ENCODE measurements at regions of chr6 and their contacts with region 1.

Region 1: DNA sequence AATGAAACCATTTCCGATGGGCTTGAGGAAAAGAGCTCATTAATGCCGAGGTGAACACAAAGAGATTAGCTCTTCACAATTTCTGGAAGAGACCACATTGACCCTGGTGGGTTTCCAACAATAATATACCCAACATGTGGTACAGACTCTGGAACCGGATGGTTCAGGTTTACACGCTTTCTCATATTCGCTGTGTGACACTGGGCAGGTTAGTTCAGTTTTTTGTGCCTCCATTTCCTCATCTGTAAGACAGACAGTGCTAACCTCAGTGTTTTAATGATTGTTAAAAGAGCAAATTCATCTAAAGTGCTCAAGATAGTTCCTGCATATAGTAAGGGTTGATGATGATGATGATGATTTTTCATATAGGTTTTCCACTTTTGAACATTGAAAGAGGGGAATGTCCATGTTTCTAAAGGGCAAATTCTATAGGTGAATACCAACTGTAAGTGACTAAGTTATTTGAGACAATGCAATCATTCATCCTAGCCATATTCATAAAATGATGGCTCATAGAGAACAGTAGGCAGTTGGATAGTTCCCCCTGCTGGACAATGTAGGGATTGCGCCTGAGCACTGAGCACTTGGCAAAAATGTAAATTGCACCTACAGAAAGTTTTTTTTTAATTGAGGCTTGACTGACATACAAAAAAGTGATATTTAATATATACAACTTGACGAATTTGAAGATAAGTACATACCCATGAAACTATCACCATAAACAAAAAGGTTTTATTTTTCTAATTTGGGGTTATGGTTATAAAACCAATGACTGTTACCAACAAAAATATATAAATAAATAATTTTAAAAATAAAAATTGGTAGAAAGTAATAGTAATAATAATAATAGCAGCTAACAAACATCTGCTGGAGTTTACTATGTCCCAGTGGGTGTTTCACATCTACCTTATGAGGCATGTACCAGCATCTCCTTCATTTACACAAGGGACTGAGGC is 2.1 kb upstream of the PERP start:
- DNase-seq: no peak
- H3K4me3 ChIP-seq: no peak overlapping the region
- H3K27me3 ChIP-seq: peaks cover 4% of the 10 kb centered on the region
- CTCF ChIP-seq: peak; percentile 91

Region 2: DNA sequence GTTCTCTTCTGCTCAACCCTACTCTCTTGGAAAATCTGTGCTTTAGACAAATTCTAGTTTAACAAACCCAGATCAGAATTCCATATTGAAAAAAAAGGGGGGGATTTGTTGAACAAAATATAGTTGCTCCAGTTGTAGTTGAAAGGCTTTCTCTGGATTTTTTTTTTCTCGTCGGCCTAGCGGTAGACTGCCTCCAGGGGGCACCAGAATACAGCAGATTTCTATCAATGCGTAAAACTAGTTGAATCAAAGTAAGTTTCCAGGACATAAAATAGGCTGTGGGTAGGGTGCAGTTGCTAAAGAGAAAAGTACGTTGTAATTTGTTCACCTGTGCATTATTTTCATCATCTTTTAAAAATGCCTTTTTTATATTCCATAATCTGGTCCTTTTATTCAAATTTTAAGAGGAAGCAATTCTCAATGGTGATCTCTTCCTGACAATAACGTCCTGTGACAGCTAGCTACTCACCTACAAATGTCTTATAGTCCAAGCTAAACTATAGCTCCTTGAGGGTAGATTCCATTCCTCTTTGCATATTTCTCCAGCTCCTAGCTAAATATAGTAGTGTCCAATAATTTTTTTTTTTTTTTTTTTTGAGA is 107.5 kb before region 1 on chr6:
- CTCF ChIA-PET with region 1: interaction called, 83 read pairs
- POLR2A ChIA-PET with region 1: no interaction called
- DNase-seq: no peak
- H3K4me3 ChIP-seq: no peak overlapping the region
- H3K27me3 ChIP-seq: 0 out of 2 replicates have a peak, but pooled peaks cover 1% of the 10 kb centered on the region
- CTCF ChIP-seq: peak; percentile 90

Region 3: DNA sequence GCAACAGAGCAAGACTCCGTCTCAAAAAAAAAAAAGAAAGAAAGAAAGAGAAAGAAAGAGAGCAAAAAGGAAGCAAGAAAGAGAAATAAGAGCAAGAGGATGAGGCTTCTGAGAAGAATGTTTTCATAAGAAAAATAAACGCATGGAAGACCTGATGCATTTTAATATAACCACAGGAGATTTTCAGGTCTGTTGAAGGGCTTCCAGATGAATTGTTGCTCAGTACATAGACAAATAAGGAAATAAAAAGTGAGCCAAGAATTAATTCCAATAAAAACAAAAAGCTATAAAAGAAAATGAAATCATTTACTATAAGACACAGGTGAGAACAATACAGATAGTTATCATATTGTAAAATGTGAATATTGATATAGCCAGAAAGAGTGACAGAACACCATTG is 45.6 kb before region 1 on chr6:
- CTCF ChIA-PET with region 1: no interaction called
- POLR2A ChIA-PET with region 1: no interaction called
- DNase-seq: no peak
- H3K4me3 ChIP-seq: no peak overlapping the region
- H3K27me3 ChIP-seq: no peaks in the 10 kb centered on the region
- CTCF ChIP-seq: no peak